Activated naive CD4-positive, alpha-beta T cell treated with anti-CD3 and anti-CD28 coated beads for 36 hours (primary cell): ENCODE measurements at regions of chr4 and their contacts with region 1.

Region 1: GRCh38 chr4:2412885-2413716 is 5.3 kb downstream of the ZFYVE28 start:
- DNase-seq: peak; percentile 94
- H3K4me3 Mint-ChIP-seq: peak overlapping the region; percentile 63
- H3K27ac Mint-ChIP-seq: peak overlapping the region; percentile 96
- H3K4me1 Mint-ChIP-seq: peaks cover 54% of the 10 kb centered on the region
- H3K27me3 Mint-ChIP-seq: peaks cover 15% of the 10 kb centered on the region

Region 2: DNA sequence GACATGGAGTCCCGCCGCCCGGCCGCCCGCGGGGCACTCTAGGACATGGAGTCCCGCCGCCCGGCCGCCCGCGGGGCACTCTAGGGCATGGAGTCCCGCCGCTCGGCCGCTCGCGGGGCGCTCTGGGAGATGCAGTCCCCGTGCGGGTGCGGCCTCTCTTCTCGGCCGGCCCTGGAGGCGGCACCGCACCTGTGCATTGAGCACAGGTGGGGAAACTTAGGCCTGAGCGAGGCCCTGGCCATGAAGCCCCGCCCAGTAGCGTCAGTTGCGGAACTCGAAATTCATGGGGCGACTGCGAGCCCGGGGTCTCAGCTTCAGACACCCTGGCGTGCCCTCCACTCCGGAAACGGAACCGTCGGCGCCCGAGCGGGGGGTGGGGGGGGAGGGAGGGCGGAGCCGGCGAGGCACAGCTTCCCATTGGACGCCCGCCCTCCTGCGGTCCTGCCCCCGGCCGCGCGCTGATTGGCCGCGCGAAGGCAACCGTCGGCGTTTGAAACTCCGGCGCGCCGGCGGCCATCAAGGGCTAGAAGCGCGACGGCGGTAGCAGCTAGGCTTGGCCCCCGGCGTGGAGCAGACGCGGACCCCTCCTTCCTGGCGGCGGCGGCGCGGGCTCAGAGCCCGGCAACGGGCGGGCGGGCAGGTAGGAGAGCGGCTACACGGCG is 692.0 kb before region 1 on chr4 and contains the starts of genes TACC3 and TMEM129:
- CTCF ChIA-PET with region 1: no interaction called
- intact Hi-C with region 1: loop called (anchors 5 kb)
- DNase-seq: peak; percentile 96
- H3K4me3 Mint-ChIP-seq: peak within 1 kb of the TSS; percentile 94
- H3K27ac Mint-ChIP-seq: peak within 1 kb of the TSS; percentile 98
- H3K4me1 Mint-ChIP-seq: peaks cover 53% of the 10 kb centered on the region
- H3K27me3 Mint-ChIP-seq: no peaks in the 10 kb centered on the region
- total RNA-seq, gene TACC3: 246 to 264 TPM
- total RNA-seq, gene TMEM129: 19.0 to 19.8 TPM

Region 3: GRCh38 chr4:2008875-2009703 is 404.0 kb before region 1 on chr4 and contains the start of gene NELFA:
- CTCF ChIA-PET with region 1: no interaction called
- intact Hi-C with region 1: loop called (anchors 1 kb)
- DNase-seq: peak; percentile 97
- H3K4me3 Mint-ChIP-seq: peak within 1 kb of the TSS; percentile 85
- H3K27ac Mint-ChIP-seq: peak within 1 kb of the TSS; percentile 87
- H3K4me1 Mint-ChIP-seq: peaks cover 29% of the 10 kb centered on the region
- H3K27me3 Mint-ChIP-seq: no peaks in the 10 kb centered on the region
- total RNA-seq, gene NELFA: 44.1 to 45.3 TPM

Region 4: GRCh38 chr4:2281575-2282343 is 131.3 kb before region 1 on chr4:
- CTCF ChIA-PET with region 1: interaction called, 7 read pairs
- intact Hi-C with region 1: loop called (anchors 1 kb)
- DNase-seq: peak; percentile 94
- H3K4me3 Mint-ChIP-seq: peak overlapping the region; percentile 17
- H3K27ac Mint-ChIP-seq: peak overlapping the region; percentile 98
- H3K4me1 Mint-ChIP-seq: peaks cover 37% of the 10 kb centered on the region
- H3K27me3 Mint-ChIP-seq: no peaks in the 10 kb centered on the region

Region 5: DNA sequence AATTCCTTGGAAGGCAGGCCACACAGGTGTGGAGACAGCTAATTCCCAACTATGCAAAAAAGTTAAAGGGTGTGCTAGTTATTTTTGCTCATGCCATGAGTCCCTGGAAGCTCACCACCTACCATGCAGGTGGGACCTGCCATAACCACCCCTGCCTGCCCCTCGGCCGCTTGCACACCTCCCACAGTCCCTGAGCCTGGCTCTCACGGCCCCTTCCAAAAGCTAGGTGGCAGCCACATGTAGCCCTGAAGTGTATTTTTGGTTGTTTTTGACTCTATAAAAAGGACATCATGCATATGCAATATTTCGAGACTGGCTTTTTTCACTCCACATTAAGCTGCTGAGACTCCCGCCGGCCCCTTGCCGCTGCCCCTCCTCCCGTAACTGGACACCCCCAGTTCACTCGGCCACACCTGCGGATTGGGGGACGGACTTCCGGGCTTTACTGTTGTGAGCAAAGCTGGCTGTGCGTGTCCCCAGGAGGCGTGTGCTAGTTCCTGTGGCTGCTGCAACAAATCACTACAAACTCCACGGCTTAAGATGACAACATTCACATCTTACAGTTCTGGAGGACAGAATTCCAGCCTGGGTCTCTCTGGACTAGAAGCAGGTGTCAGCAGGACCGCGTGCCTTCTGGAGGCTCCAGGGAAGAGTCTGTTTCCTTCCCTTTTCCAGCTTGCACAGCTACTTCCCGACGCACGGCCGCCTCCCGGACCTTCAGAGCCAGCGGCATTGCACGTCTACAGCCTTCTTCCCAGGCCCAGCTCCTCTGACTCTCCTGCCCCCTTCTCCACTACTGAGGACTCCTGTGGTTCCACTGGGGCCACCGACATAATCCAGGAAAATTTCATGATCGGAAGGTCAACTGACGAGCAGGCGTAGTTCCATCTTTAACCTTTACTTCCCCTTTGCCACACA is 19.5 kb before region 1 on chr4:
- CTCF ChIA-PET with region 1: interaction called, 17 read pairs
- intact Hi-C with region 1: no loop called
- DNase-seq: peak; percentile 41
- H3K4me3 Mint-ChIP-seq: peak overlapping the region; percentile 57
- H3K27ac Mint-ChIP-seq: no peak overlapping the region
- H3K4me1 Mint-ChIP-seq: peaks cover 24% of the 10 kb centered on the region
- H3K27me3 Mint-ChIP-seq: peaks cover 3% of the 10 kb centered on the region

Region 6: DNA sequence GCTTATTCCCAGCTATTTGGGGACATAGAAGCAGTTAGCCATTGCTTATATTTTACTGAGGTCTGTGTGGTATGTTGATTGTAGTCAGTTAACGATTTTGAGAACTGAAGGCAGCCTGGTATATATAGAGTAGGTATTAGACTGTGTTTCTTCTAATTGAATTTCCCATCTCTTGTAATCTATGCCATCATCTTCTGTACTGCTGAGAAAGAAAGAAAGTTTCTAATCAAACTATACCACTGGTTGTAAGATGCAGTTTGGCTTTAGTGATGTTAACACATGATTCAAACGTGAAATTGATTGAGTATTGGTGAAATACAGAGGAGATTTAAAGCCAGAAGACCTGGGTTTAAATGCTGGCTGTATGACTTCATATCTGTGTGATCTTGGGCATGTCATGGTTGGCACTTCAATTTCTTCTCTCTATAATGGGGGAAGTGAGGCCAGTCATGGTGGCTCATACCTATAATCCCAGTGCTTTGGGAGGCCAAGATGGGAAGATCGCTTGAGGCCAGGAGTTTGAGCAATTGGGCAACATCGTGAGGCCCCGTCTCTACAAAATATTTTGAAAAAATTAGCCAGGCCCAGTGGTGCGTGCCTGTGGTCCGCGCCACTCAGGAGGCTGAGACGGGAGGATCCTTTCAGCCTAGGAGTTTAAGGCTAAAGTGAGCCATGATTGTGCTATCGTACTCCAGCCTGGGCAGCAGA is 673.0 kb after region 1 on chr4:
- CTCF ChIA-PET with region 1: no interaction called
- intact Hi-C with region 1: loop called (anchors 5 kb)
- DNase-seq: no peak
- H3K4me3 Mint-ChIP-seq: peak overlapping the region; percentile 23
- H3K27ac Mint-ChIP-seq: peak overlapping the region; percentile 86
- H3K4me1 Mint-ChIP-seq: peaks cover 69% of the 10 kb centered on the region
- H3K27me3 Mint-ChIP-seq: no peaks in the 10 kb centered on the region